Lower leg skin (tissue), 4 donors: ENCODE measurements at regions of chr3 and their contacts with region 1.

Region 1: DNA sequence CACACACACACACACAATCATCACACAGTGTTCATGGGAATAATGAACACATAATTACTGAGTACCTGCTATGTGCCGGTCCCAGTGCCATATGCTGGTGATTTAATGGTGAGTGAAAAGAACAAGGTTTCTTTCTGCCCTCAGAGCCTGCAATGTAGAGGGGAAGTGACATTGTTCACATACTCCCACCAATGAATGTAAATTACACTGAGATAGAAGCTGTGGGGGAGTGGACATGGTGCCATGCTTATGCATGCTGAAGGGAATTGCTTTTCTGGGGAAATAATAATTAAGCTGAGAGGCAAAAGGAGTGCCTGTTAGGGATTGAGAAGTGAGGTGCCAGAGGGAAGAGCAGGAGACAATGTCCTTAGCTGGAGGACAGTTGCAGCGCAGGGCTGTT is 175.1 kb downstream of the MFSD1 start:
- DNase-seq: no peak
- H3K4me3 ChIP-seq: no peak overlapping the region
- CTCF ChIP-seq: no peak
- POLR2A ChIP-seq: no peak

Region 2: GRCh38 chr3:159005137-159005536 is 28.2 kb after region 1 on chr3:
- intact Hi-C with region 1: loop called (anchors 1 kb)
- DNase-seq: no peak
- H3K4me3 ChIP-seq: no peak overlapping the region
- CTCF ChIP-seq: no peak
- POLR2A ChIP-seq: no peak

Region 3: GRCh38 chr3:160434071-160434470 is 1457.1 kb after region 1 on chr3:
- intact Hi-C with region 1: no loop called
- DNase-seq: no peak
- H3K4me3 ChIP-seq: no peak overlapping the region
- CTCF ChIP-seq: no peak
- POLR2A ChIP-seq: no peak